ENCODE measurements at regions of chr19 and their contacts with region 1.

Region 1: GRCh38 chr19:14889994-14890642 is 4.2 kb upstream of the OR7A17 start:
- DNase-seq: no peak
- ATAC-seq: no peak
- H3K4me3 Mint-ChIP-seq: no peak overlapping the region
- H3K27ac Mint-ChIP-seq: no peak overlapping the region
- H3K4me1 Mint-ChIP-seq: peaks cover 7% of the 10 kb centered on the region
- H3K27me3 Mint-ChIP-seq: peaks cover 26% of the 10 kb centered on the region
- CTCF ChIP-seq: no peak

Region 2: GRCh38 chr19:14571695-14572490 is 318.2 kb before region 1 on chr19 and contains the start of gene NDUFB7:
- CTCF ChIA-PET with region 1: interaction called, 3 read pairs
- POLR2A ChIA-PET with region 1: no interaction called
- intact Hi-C with region 1: loop called (anchors 10 kb)
- DNase-seq: peak; percentile 95
- ATAC-seq: peak; percentile 96
- H3K4me3 Mint-ChIP-seq: peak within 1 kb of the TSS; percentile 96
- H3K27ac Mint-ChIP-seq: peak within 1 kb of the TSS; percentile 91
- H3K4me1 Mint-ChIP-seq: peaks cover 39% of the 10 kb centered on the region
- H3K27me3 Mint-ChIP-seq: no peaks in the 10 kb centered on the region
- CTCF ChIP-seq: peak; percentile 65
- total RNA-seq, gene NDUFB7: 123 to 135 TPM

Region 3: GRCh38 chr19:14985133-14985532 is 95.0 kb after region 1 on chr19:
- CTCF ChIA-PET with region 1: no interaction called
- POLR2A ChIA-PET with region 1: no interaction called
- intact Hi-C with region 1: no loop called
- DNase-seq: peak; percentile 15
- ATAC-seq: no peak
- H3K4me3 Mint-ChIP-seq: no peak overlapping the region
- H3K27ac Mint-ChIP-seq: no peak overlapping the region
- H3K4me1 Mint-ChIP-seq: no peaks in the 10 kb centered on the region
- H3K27me3 Mint-ChIP-seq: peaks cover 23% of the 10 kb centered on the region
- CTCF ChIP-seq: no peak

Measured in activated CD8-positive, alpha-beta T cell treated with anti-CD3 and anti-CD28 coated beads for 36 hours (primary cell).